Adrenal gland (tissue), 19 donors: ENCODE measurements at regions of chr2 and their contacts with region 1.

Region 1: GRCh38 chr2:235050992-235051351 is 99.2 kb downstream of the SH3BP4 start:
- DNase-seq: peak; percentile 66 to 97 (median 85)
- H3K4me3 ChIP-seq: no peak overlapping the region
- H3K27ac ChIP-seq: peak overlapping the region in 2 of 5 donors; percentile 23 to 56
- H3K4me1 ChIP-seq: peaks cover 0 to 11% of the 10 kb centered on the region in 2 donors
- H3K27me3 ChIP-seq: no peaks in the 10 kb centered on the region
- CTCF ChIP-seq: peak in 1 of 6 experiments; percentile 4
- POLR2A ChIP-seq: no peak

Region 2: GRCh38 chr2:234770031-234770506 is 280.9 kb before region 1 on chr2:
- intact Hi-C with region 1: no loop called
- DNase-seq: no peak
- H3K4me3 ChIP-seq: no peak overlapping the region
- H3K27ac ChIP-seq: no peak overlapping the region
- H3K4me1 ChIP-seq: no peaks in the 10 kb centered on the region
- H3K27me3 ChIP-seq: no peaks in the 10 kb centered on the region
- CTCF ChIP-seq: no peak
- POLR2A ChIP-seq: no peak

Region 3: GRCh38 chr2:234881413-234882241 is 169.3 kb before region 1 on chr2:
- intact Hi-C with region 1: loop called in 1 of 2 experiments (anchors 10 kb)
- DNase-seq: peak; percentile 86 to 97 (median 95)
- H3K4me3 ChIP-seq: peak overlapping the region in 1 of 4 donors; percentile 47
- H3K27ac ChIP-seq: peak overlapping the region in 3 of 5 donors; percentile 59 to 88 (median 80)
- H3K4me1 ChIP-seq: peaks cover 8 to 17% of the 10 kb centered on the region in 2 donors
- H3K27me3 ChIP-seq: no peaks in the 10 kb centered on the region
- CTCF ChIP-seq: peak; percentile 77 to 90 (median 88)
- POLR2A ChIP-seq: no peak